CD4-positive, alpha-beta T cell (primary cell): ENCODE measurements at regions of chr16 and their contacts with region 1.

Region 1: DNA sequence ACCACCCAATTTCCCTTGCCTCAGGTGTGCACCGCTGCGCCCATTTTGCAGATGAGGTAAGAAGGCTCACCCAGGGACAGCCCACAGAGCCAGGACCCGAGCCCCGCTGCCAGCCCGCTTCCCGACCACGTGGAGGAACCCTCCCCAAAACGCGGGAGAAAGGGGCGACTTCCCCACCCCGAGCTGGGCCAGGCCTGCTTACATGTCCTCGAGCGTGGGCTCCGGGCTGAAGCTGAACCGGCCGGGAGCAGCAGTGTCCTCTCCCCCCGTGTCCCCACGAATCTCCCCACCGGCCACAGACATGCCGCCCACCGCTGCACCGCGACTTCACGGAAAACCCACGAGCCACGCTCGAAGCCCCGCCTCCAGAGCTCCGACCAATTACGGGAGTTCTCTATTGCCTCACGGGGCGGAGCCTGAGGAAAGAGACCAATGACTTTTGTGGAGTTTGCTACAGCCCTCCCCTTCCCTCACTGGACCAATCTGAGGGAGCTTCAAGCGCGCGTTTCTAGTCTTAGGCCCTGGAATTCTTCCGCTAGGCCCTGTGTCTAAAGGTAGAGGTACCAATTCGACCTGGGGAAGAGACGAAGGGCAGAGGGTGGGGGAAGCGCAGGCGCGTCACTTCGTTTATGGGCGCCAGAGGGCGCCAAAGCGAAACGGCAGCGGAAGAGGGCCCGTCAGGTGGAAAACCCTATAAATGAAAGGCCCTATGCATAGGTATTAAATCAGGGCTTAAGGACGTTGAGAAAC is at the start of gene DCTPP1:
- DNase-seq: peak; percentile 89 to 99 (median 93)
- ATAC-seq: peak; percentile 96
- H3K4me3 ChIP-seq: peak within 1 kb of the TSS; percentile 97
- H3K4me3 Mint-ChIP-seq: no peak within 1 kb of the TSS
- H3K27ac ChIP-seq: peak within 1 kb of the TSS; percentile 70 to 81
- H3K27ac Mint-ChIP-seq: no peak within 1 kb of the TSS
- H3K4me1 ChIP-seq: peaks cover 38% of the 10 kb centered on the region
- H3K4me1 Mint-ChIP-seq: peaks cover 21% of the 10 kb centered on the region
- H3K27me3 ChIP-seq: no peaks in the 10 kb centered on the region
- H3K27me3 Mint-ChIP-seq: no peaks in the 10 kb centered on the region
- CTCF ChIP-seq: peak; percentile 75
- total RNA-seq, gene DCTPP1: 5.4 to 6.5 TPM

Region 2: GRCh38 chr16:30173054-30173453 is 256.8 kb before region 1 on chr16:
- CTCF ChIA-PET with region 1: no interaction called
- POLR2A ChIA-PET with region 1: no interaction called
- intact Hi-C with region 1: no loop called
- DNase-seq: no peak
- ATAC-seq: no peak
- H3K4me3 ChIP-seq: no peak overlapping the region
- H3K4me3 Mint-ChIP-seq: no peak overlapping the region
- H3K27ac ChIP-seq: no peak overlapping the region
- H3K27ac Mint-ChIP-seq: no peak overlapping the region
- H3K4me1 ChIP-seq: no peaks in the 10 kb centered on the region
- H3K4me1 Mint-ChIP-seq: no peaks in the 10 kb centered on the region
- H3K27me3 ChIP-seq: no peaks in the 10 kb centered on the region
- H3K27me3 Mint-ChIP-seq: no peaks in the 10 kb centered on the region
- CTCF ChIP-seq: no peak

Region 3: DNA sequence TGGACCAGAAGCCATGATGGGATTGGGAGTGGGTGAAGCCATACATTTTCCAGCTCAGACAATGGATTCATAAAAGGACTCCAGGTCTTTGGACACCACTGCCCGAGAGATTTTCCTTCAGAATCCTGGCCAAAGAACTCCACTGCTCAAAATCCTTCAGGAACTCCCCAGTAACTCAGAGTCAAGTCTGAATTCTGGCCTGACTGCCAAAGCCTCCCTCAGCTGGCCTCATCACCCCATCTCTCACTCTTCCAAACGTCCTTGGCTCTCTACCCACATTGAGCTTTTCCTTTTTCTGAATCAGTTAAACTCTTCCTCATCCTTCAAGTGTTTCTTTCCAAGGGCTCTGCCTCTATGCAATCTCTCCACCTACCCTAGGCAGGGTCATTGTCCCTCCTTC is 46.3 kb before region 1 on chr16:
- CTCF ChIA-PET with region 1: interaction called, 3 read pairs
- POLR2A ChIA-PET with region 1: interaction called, 24 read pairs
- intact Hi-C with region 1: loop called in 1 of 2 experiments (anchors 1 kb)
- DNase-seq: no peak
- ATAC-seq: no peak
- H3K4me3 ChIP-seq: peak overlapping the region; percentile 81
- H3K4me3 Mint-ChIP-seq: peak overlapping the region; percentile 99
- H3K27ac ChIP-seq: peak overlapping the region; percentile 65 to 100
- H3K27ac Mint-ChIP-seq: peak overlapping the region; percentile 100
- H3K4me1 ChIP-seq: peaks cover 60% of the 10 kb centered on the region
- H3K4me1 Mint-ChIP-seq: peaks cover 48% of the 10 kb centered on the region
- H3K27me3 ChIP-seq: no peaks in the 10 kb centered on the region
- H3K27me3 Mint-ChIP-seq: no peaks in the 10 kb centered on the region
- CTCF ChIP-seq: no peak

Region 4: DNA sequence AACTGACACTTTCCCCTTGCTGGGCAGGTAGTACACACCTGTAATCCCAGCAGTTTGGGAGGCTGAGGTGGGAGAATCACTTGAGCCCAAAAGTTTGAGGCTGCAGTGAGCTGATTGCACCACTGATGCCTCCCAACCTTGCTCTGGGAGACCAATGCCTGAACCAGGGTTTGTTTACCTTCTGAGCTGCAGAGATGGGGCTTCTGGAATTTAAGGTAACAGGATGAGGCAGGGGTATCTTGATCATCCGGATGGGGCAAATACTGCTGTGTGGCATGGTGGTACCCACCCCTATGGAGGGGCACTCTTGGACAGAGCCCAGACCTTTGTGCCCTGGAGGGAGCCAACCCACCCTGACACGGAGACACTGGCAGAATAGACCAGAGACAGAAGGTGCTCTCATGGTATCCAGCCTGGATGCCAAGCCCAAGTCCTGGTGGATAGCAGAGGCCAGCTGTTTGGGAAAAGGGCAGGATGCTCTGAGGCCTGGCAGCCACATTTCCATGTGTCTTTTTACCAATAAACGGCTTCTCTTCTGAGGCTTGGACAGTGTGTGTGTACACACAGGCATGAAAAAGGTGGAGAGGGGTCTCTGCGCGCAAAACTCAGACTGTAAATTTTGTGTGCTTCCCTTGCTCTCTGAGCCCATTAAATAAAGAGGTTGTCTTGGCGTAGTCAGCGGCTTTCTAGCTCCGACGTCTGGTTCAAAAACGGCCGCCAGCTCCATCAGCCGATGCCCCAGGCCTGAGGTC is 30.2 kb before region 1 on chr16:
- CTCF ChIA-PET with region 1: no interaction called
- POLR2A ChIA-PET with region 1: no interaction called
- intact Hi-C with region 1: no loop called
- DNase-seq: no peak
- ATAC-seq: no peak
- H3K4me3 ChIP-seq: peak overlapping the region; percentile 81
- H3K4me3 Mint-ChIP-seq: peak overlapping the region; percentile 91
- H3K27ac ChIP-seq: no peak overlapping the region
- H3K27ac Mint-ChIP-seq: peak overlapping the region; percentile 76
- H3K4me1 ChIP-seq: peaks cover 49% of the 10 kb centered on the region
- H3K4me1 Mint-ChIP-seq: peaks cover 48% of the 10 kb centered on the region
- H3K27me3 ChIP-seq: no peaks in the 10 kb centered on the region
- H3K27me3 Mint-ChIP-seq: no peaks in the 10 kb centered on the region
- CTCF ChIP-seq: no peak

Region 5: GRCh38 chr16:30458561-30459394 is 28.9 kb after region 1 on chr16:
- CTCF ChIA-PET with region 1: no interaction called
- POLR2A ChIA-PET with region 1: interaction called, 22 read pairs
- intact Hi-C with region 1: no loop called
- DNase-seq: peak in 13 of 14 experiments; percentile 49 to 93 (median 71)
- ATAC-seq: peak; percentile 94
- H3K4me3 ChIP-seq: peak overlapping the region; percentile 13
- H3K4me3 Mint-ChIP-seq: peak overlapping the region; percentile 60
- H3K27ac ChIP-seq: peak overlapping the region; percentile 55 to 61
- H3K27ac Mint-ChIP-seq: peak overlapping the region; percentile 91
- H3K4me1 ChIP-seq: peaks cover 37% of the 10 kb centered on the region
- H3K4me1 Mint-ChIP-seq: peaks cover 55% of the 10 kb centered on the region
- H3K27me3 ChIP-seq: no peaks in the 10 kb centered on the region
- H3K27me3 Mint-ChIP-seq: no peaks in the 10 kb centered on the region
- CTCF ChIP-seq: no peak

Region 6: DNA sequence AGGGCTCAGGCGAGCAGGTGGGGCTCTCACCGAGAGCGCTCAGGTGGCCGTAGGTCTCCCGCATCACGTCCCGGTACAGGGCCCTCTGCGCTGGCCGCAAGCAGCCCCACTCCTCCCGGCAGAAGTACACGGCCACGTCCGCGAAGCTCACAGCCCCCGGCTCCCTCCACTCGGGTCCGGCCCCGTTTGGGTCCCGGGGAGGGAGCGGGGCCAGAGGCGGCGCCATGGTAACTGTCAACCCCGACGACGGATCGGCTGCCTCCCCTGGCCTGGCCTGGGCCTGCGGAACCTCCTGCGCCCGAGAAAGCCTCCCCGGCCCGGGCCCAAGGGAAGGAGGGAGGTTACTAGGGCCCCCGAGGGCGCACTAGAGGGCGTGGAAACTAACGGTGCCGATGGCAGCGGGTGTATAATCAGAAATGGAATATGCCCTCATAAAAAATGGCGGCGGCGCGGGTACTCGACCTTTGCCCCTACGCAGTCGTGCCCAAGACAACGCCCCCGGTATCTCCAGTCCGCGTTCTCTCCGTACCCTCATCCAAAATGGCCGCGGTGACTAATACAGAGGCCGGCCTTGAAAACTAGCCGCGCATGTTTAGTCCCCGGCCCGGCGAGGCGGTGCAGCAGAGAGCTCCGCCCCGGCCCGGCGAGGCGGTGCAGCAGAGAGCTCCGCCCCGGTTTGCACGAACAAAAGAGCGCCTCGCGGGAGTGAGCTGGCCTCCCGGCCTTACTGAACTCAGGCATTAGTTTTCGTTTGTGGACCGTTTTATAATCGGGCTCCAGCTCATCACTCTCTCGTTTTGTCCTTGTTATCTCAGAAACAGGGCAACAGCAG is 128.3 kb after region 1 on chr16 and contains the start of gene ZNF764:
- CTCF ChIA-PET with region 1: interaction called, 16 read pairs
- POLR2A ChIA-PET with region 1: interaction called, 28 read pairs
- intact Hi-C with region 1: loop called in 1 of 2 experiments (anchors 5 kb)
- DNase-seq: peak; percentile 90 to 99 (median 95)
- ATAC-seq: peak; percentile 89
- H3K4me3 ChIP-seq: peak within 1 kb of the TSS; percentile 73
- H3K4me3 Mint-ChIP-seq: peak within 1 kb of the TSS; percentile 93
- H3K27ac ChIP-seq: peak within 1 kb of the TSS; percentile 93 to 94
- H3K27ac Mint-ChIP-seq: peak within 1 kb of the TSS; percentile 94
- H3K4me1 ChIP-seq: peaks cover 68% of the 10 kb centered on the region
- H3K4me1 Mint-ChIP-seq: peaks cover 41% of the 10 kb centered on the region
- H3K27me3 ChIP-seq: no peaks in the 10 kb centered on the region
- H3K27me3 Mint-ChIP-seq: no peaks in the 10 kb centered on the region
- CTCF ChIP-seq: no peak
- total RNA-seq, gene ZNF764: 20.4 to 22.9 TPM

Region 7: GRCh38 chr16:30609926-30610839 is 180.3 kb after region 1 on chr16 and contains the start of gene ZNF689:
- CTCF ChIA-PET with region 1: interaction called, 4 read pairs
- POLR2A ChIA-PET with region 1: interaction called, 12 read pairs
- intact Hi-C with region 1: loop called in 1 of 2 experiments (anchors 5 kb)
- DNase-seq: peak; percentile 88 to 97 (median 94)
- ATAC-seq: peak; percentile 92
- H3K4me3 ChIP-seq: peak within 1 kb of the TSS; percentile 74
- H3K4me3 Mint-ChIP-seq: peak within 1 kb of the TSS; percentile 91
- H3K27ac ChIP-seq: peak within 1 kb of the TSS; percentile 86 to 89
- H3K27ac Mint-ChIP-seq: peak within 1 kb of the TSS; percentile 93
- H3K4me1 ChIP-seq: peaks cover 26% of the 10 kb centered on the region
- H3K4me1 Mint-ChIP-seq: peaks cover 23% of the 10 kb centered on the region
- H3K27me3 ChIP-seq: no peaks in the 10 kb centered on the region
- H3K27me3 Mint-ChIP-seq: no peaks in the 10 kb centered on the region
- CTCF ChIP-seq: no peak
- total RNA-seq, gene ZNF689: 15.3 to 15.7 TPM

Region 8: DNA sequence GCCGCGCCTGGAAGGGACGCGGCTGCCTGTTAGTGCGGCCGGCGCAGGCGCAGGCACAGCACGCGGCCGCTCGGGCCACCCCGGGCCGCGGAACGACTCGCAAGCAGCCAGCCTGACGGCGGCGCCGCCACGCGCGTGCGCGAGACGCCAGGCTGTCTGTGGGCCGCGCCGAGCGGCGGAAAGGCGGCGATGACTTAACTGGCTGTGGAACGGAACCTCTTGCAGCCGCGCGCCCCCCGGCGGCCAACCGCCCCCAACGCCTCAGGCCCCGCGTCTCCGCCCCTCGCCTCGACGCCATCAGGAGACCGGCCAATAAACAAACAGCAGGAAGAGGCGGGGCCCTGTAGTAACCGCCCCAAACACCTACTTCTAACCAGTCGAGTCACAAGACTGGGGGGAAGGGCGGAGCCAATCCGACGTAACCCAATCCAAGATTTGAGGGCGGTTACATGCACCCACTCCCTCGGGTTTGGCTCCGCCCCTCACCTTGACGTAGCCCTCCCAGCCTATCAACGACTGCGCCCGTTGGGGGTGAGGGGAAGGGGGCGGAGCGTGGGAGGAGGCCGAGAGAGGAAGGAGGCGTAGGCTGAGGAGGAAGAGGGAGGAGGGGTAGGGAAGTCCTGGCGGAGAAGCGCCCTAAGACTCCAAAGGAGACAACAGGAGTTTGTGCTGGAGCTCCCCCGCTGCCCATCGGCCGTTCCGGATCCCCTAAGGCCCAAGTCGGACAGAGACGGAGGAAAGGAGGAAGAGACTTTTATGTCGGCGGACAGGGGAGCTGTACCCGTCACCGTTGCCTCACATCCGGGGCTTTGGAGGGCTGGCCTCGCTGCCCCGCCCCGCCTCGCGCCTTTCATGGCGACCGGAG is 228.2 kb after region 1 on chr16 and contains the start of gene FBRS:
- CTCF ChIA-PET with region 1: no interaction called
- POLR2A ChIA-PET with region 1: interaction called, 18 read pairs
- intact Hi-C with region 1: loop called in 1 of 2 experiments (anchors 1 kb)
- DNase-seq: peak; percentile 99 to 100 (median 100)
- ATAC-seq: peak; percentile 74
- H3K4me3 ChIP-seq: peak within 1 kb of the TSS; percentile 93
- H3K4me3 Mint-ChIP-seq: peak within 1 kb of the TSS; percentile 94
- H3K27ac ChIP-seq: peak within 1 kb of the TSS; percentile 99
- H3K27ac Mint-ChIP-seq: peak within 1 kb of the TSS; percentile 99
- H3K4me1 ChIP-seq: peaks cover 51% of the 10 kb centered on the region
- H3K4me1 Mint-ChIP-seq: peaks cover 44% of the 10 kb centered on the region
- H3K27me3 ChIP-seq: no peaks in the 10 kb centered on the region
- H3K27me3 Mint-ChIP-seq: no peaks in the 10 kb centered on the region
- CTCF ChIP-seq: peak; percentile 78
- total RNA-seq, gene FBRS: 162 to 163 TPM

Region 9: GRCh38 chr16:31810863-31811262 is 1381.0 kb after region 1 on chr16:
- CTCF ChIA-PET with region 1: no interaction called
- POLR2A ChIA-PET with region 1: no interaction called
- intact Hi-C with region 1: no loop called
- DNase-seq: no peak
- ATAC-seq: no peak
- H3K4me3 ChIP-seq: no peak overlapping the region
- H3K4me3 Mint-ChIP-seq: no peak overlapping the region
- H3K27ac ChIP-seq: no peak overlapping the region
- H3K27ac Mint-ChIP-seq: no peak overlapping the region
- H3K4me1 ChIP-seq: no peaks in the 10 kb centered on the region
- H3K4me1 Mint-ChIP-seq: no peaks in the 10 kb centered on the region
- H3K27me3 ChIP-seq: no peaks in the 10 kb centered on the region
- H3K27me3 Mint-ChIP-seq: peaks cover 10% of the 10 kb centered on the region
- CTCF ChIP-seq: no peak